Activated CD4-positive, alpha-beta T cell treated with anti-CD3 and anti-CD28 coated beads for 36 hours (primary cell): ENCODE measurements at regions of chr1 and their contacts with region 1.

Region 1: DNA sequence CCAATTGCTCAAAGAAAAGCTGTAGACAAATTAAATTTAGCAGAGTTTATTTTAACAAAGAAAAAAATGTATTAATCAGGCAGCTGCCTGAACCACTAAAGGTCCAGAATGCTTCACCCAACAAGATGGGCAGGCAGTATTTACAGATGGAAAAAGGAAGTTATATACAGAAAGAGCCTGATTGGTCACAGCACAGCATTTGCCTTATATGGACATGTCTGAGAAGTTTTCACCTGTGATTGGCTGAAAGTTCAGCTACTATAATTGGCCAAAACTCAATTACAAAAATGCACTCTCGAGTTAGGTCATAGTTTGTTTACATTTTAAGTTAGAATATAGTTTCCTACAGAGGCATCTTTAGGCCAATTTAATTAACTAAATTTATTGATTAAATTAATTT is 15.1 kb upstream of the FMO1 start:
- DNase-seq: no peak
- ATAC-seq: no peak
- H3K4me3 Mint-ChIP-seq: no peak overlapping the region
- H3K27ac Mint-ChIP-seq: no peak overlapping the region
- H3K4me1 Mint-ChIP-seq: no peaks in the 10 kb centered on the region
- H3K27me3 Mint-ChIP-seq: peaks cover 13% of the 10 kb centered on the region

Region 2: GRCh38 chr1:171245458-171246064 is 12.4 kb after region 1 on chr1:
- CTCF ChIA-PET with region 1: interaction called, 14 read pairs
- POLR2A ChIA-PET with region 1: no interaction called
- intact Hi-C with region 1: no loop called
- DNase-seq: peak; percentile 35
- ATAC-seq: no peak
- H3K4me3 Mint-ChIP-seq: no peak overlapping the region
- H3K27ac Mint-ChIP-seq: no peak overlapping the region
- H3K4me1 Mint-ChIP-seq: no peaks in the 10 kb centered on the region
- H3K27me3 Mint-ChIP-seq: peaks cover 17% of the 10 kb centered on the region

Region 3: DNA sequence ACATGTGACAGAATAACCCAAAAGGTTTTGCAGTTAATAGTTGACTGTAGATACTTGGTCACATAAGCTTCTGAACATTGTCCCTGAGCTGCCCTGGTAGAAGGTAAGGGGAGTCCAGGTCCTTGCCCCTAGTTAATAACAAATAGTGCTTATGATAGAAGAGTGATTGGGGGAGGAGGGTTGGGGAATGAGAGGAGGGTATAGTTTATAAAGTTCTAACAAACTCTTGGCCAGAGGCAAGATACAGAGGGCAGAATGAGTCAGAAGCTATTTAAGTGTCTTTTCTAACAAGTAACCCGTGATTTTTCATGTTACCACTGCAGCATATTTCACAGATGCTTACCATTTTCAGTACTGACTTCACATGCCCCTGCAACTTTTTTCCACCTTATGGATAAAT is 362.1 kb after region 1 on chr1:
- CTCF ChIA-PET with region 1: no interaction called
- POLR2A ChIA-PET with region 1: no interaction called
- intact Hi-C with region 1: no loop called
- DNase-seq: no peak
- ATAC-seq: peak; percentile 39
- H3K4me3 Mint-ChIP-seq: no peak overlapping the region
- H3K27ac Mint-ChIP-seq: no peak overlapping the region
- H3K4me1 Mint-ChIP-seq: no peaks in the 10 kb centered on the region
- H3K27me3 Mint-ChIP-seq: no peaks in the 10 kb centered on the region